ENCODE measurements at regions of chr5 and their contacts with region 1.

Region 1: GRCh38 chr5:54533541-54534190 is 16.1 kb downstream of the SNX18 start:
- DNase-seq: no peak
- ATAC-seq: no peak
- H3K4me3 Mint-ChIP-seq: no peak overlapping the region
- H3K27ac Mint-ChIP-seq: peak overlapping the region in 4 of 10 donors; percentile 14 to 65 (median 32)
- H3K4me1 Mint-ChIP-seq: peaks cover 24 to 66% (median 53%) of the 10 kb centered on the region in 4 donors
- H3K27me3 Mint-ChIP-seq: no peaks in the 10 kb centered on the region

Region 2: DNA sequence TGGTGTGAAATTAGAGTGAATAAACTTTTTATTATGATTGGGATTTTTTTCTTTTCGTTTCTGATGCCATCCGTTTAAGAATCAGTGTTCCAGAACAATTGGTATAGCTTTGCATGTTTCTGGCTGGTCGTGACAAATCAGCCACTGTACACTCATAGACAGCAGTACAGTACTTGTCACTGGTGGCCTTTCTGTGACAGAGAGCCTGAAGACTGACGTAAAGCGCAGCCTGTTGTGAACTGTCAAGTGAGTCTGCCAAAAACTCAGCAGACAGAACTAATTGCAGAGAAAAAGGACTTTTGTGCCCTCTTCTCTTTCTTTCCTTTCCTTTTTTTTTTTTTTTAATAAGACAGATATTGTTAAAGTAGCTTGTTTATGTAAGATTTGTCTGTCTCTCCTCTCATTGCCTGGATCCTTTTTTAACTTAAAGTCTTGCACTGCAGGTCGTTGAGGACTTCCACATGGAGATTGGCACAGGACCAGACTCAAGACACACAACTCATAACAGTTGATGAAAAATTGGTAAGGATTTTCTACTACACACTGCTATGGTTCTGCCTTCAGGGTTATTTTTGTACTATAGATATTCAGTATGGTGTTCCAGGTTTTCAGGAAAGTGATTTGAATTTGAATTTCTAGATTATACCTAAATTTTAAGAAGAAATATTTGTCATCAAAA is 930.5 kb before region 1 on chr5:
- POLR2A ChIA-PET with region 1: interaction called, 10 read pairs
- DNase-seq: no peak
- ATAC-seq: no peak
- H3K4me3 Mint-ChIP-seq: no peak overlapping the region
- H3K27ac Mint-ChIP-seq: no peak overlapping the region
- H3K4me1 Mint-ChIP-seq: peaks cover 0 to 3% (median 1%) of the 10 kb centered on the region in 4 donors
- H3K27me3 Mint-ChIP-seq: no peaks in the 10 kb centered on the region

Region 3: DNA sequence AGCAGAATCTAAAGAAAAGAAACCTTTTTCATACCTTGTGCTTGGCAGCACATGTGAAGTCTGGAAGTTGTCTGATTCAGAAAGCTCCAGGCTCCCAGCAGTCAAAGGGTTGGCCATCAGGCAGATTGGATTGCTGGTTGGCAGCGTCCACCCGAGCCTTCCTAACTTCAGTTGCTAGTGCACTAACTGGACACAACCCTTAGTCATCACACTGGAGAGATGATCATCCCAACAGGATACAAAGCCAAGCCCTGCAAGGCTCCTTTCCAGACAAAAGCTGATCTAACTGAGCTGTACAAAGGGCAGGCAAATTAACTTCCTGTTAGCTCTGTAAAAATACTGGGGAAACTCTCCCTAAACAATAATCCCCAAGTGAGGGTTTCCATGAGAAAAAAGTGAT is 169.5 kb after region 1 on chr5:
- POLR2A ChIA-PET with region 1: no interaction called
- DNase-seq: no peak
- ATAC-seq: no peak
- H3K4me3 Mint-ChIP-seq: no peak overlapping the region
- H3K27ac Mint-ChIP-seq: peak overlapping the region in 2 of 10 donors; percentile 22 to 61
- H3K4me1 Mint-ChIP-seq: peaks cover 0 to 17% (median 6%) of the 10 kb centered on the region in 4 donors
- H3K27me3 Mint-ChIP-seq: no peaks in the 10 kb centered on the region

Measured in naive thymus-derived CD8-positive, alpha-beta T cell (primary cell).